Transverse colon (tissue), 4 donors: ENCODE measurements at regions of chr12 and their contacts with region 1.

Region 1: GRCh38 chr12:50425589-50426258 is 25.0 kb downstream of the LARP4 start:
- DNase-seq: no peak
- H3K4me3 ChIP-seq: no peak overlapping the region
- H3K27ac ChIP-seq: no peak overlapping the region
- H3K4me1 ChIP-seq: no peaks in the 10 kb centered on the region
- H3K27me3 ChIP-seq: no peaks in the 10 kb centered on the region
- CTCF ChIP-seq: no peak
- EP300 ChIP-seq: no peak
- POLR2A ChIP-seq: no peak

Region 2: DNA sequence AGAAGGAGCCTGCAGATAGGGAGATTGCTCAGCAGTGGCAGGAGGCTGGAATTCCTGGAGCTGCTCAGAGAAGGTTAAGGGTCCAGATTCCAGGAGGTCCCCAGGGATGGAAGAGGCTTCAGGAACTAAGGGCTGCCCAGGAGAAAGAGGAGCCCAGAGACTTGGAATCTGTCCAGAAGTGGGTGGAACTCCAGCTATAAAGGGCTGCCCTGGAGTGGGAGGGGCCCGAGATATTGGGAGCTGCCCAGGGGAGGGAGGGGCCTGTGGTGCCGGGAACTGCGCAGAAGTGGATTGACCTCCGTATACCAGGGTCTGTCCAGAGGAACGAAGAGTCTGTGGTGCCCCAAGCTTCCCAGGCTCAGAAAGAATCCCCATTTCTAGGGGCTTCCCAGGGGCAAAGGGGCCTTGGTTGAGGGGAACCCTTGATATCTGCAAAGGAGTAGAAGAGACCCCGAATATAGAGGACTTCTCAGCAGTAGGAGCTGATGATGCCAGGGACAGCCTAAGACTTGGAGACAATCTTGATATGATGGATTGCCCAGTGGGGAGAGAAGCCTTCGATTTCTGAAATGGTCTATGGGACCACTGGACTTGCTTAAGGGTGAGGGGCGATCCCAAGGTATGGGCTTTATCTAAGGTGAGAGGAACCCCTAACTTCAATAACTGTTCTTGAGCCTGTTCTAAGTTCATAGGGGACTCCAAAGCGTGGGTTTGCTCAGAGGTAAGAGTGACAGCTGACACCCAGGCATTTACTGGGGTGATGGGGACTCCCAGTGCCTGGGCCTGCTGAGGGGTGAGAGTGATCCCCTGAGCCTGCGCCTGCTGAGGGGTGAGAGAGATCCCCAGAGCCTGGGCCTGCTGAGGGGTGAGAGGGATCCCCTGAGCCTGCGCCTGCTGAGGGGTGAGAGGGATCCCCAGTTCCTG is 74.3 kb before region 1 on chr12:
- in situ Hi-C with region 1: no loop called
- intact Hi-C with region 1: no loop called
- DNase-seq: peak; percentile 24
- H3K4me3 ChIP-seq: no peak overlapping the region
- H3K27ac ChIP-seq: no peak overlapping the region
- H3K4me1 ChIP-seq: peaks cover 0 to 15% (median 6%) of the 10 kb centered on the region in 4 donors
- H3K27me3 ChIP-seq: no peaks in the 10 kb centered on the region
- CTCF ChIP-seq: no peak
- EP300 ChIP-seq: no peak
- POLR2A ChIP-seq: no peak

Region 3: GRCh38 chr12:50715174-50715573 is 289.4 kb after region 1 on chr12:
- in situ Hi-C with region 1: loop called in 1 of 4 experiments (anchors 25 kb)
- intact Hi-C with region 1: no loop called
- DNase-seq: no peak
- H3K4me3 ChIP-seq: no peak overlapping the region
- H3K27ac ChIP-seq: no peak overlapping the region
- H3K4me1 ChIP-seq: no peaks in the 10 kb centered on the region
- H3K27me3 ChIP-seq: no peaks in the 10 kb centered on the region
- CTCF ChIP-seq: no peak
- EP300 ChIP-seq: no peak
- POLR2A ChIP-seq: no peak